AG04450 (cell line): ENCODE measurements at regions of chr1 and their contacts with region 1.

Region 1: GRCh38 chr1:91500756-91501522 is at the start of gene CDC7:
- DNase-seq: peak; percentile 85
- H3K4me3 ChIP-seq: peak within 1 kb of the TSS; percentile 91
- H3K27ac ChIP-seq: peak within 1 kb of the TSS; percentile 84
- H3K27me3 ChIP-seq: peaks cover 3% of the 10 kb centered on the region
- CTCF ChIP-seq: peak; percentile 58
- polyA plus RNA-seq, gene CDC7: 3.3 and 4.6 TPM in 2 replicates

Region 2: DNA sequence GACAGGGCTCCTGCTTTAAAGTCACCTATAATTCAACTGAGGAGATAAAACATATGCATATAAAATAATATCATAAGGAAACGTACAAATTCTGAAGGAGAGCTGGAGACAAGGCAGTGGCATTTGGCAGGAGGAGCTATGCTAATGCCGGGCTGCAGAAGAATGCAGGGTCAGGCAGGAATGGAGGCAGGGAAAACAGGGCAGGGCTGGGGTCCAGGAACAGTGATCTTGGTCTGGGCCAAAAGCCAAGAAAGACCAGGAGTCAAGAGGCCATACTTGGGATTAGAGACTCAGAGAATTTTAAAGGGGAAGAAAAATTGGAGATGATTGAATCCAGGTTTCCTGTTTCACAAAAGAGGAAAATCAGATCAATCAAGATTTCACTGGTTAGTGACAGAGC is 428.3 kb after region 1 on chr1:
- CTCF ChIA-PET with region 1: interaction called, 25 read pairs
- POLR2A ChIA-PET with region 1: no interaction called
- DNase-seq: no peak
- H3K4me3 ChIP-seq: no peak overlapping the region
- H3K27ac ChIP-seq: no peak overlapping the region
- H3K27me3 ChIP-seq: no peaks in the 10 kb centered on the region
- CTCF ChIP-seq: no peak